WTC11 (cell line): ENCODE measurements at regions of chr4 and their contacts with region 1.

Region 1: GRCh38 chr4:4969298-4969697 is 50.0 kb downstream of the CYTL1 start:
- DNase-seq: no peak
- ATAC-seq: no peak
- H3K4me3 Mint-ChIP-seq: no peak overlapping the region
- H3K27ac Mint-ChIP-seq: no peak overlapping the region
- H3K4me1 Mint-ChIP-seq: no peaks in the 10 kb centered on the region
- H3K27me3 Mint-ChIP-seq: peaks cover 50% of the 10 kb centered on the region
- CTCF ChIP-seq: no peak

Region 2: DNA sequence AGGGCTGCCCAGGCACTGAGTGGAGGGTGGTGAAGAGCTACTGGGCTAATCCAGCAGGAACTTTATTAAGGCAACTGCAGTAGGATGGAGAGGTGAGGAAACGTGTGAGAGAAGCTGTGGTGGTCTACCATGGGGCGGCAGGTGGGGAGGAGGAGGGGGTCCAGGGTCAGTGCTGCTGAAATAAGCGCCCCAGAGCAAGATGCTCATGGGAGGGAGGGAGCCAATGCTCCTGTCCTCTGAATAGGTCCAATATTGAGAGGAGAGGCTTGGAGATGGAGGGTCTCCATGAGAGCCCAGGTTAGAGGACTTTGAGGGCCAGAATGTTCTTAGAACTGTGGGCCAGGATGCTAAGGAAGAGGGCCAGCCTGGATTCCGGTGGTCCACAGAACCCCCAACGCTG is 777.0 kb after region 1 on chr4:
- CTCF ChIA-PET with region 1: no interaction called
- POLR2A ChIA-PET with region 1: interaction called, 13 read pairs
- DNase-seq: no peak
- ATAC-seq: no peak
- H3K4me3 Mint-ChIP-seq: no peak overlapping the region
- H3K27ac Mint-ChIP-seq: no peak overlapping the region
- H3K4me1 Mint-ChIP-seq: peaks cover 13% of the 10 kb centered on the region
- H3K27me3 Mint-ChIP-seq: no peaks in the 10 kb centered on the region; the same call in 1 of the 2 replicates
- CTCF ChIP-seq: no peak